ENCODE measurements at regions of chr6 and their contacts with region 1.

Region 1: GRCh38 chr6:44655412-44656342 is 268.2 kb downstream of the CDC5L start:
- DNase-seq: peak; percentile 90
- H3K4me3 Mint-ChIP-seq: peak overlapping the region; percentile 2
- H3K27ac Mint-ChIP-seq: peak overlapping the region; percentile 20
- H3K4me1 Mint-ChIP-seq: peaks cover 21% of the 10 kb centered on the region
- H3K27me3 Mint-ChIP-seq: peaks cover 83% of the 10 kb centered on the region
- CTCF ChIP-seq: peak; percentile 98

Region 2: DNA sequence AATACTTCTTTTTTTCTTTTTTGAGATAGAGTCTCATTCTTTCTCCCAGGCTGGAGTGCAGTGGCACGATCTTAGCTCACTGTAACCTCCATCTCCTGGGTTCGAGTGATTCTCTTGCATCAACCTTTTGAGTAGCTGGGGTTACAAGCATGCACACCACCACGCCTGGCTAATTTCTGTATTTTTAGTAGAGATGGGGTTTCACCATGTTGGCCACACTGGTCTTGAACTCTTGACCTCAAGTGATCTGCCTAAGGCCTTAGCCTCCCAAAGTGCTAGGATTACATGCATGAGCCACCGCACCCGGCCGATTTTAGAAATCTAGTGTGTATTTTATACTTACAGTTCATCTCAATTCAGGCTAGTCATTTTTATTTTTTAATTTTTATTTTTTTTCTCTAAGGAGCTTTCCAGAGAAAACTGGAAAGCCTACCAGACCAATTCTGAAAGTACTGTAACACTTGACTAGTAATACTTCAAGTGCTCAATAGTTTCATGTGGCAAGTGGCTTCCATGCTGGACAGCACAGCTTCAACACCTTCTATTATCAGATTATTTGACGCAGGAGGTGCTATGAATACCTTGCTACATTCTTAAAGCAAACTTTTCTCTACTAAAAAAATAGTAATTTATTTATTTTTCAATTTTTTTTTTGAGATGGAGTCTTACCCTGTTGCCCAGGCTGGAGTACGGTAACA is 1113.8 kb before region 1 on chr6:
- CTCF ChIA-PET with region 1: no interaction called
- intact Hi-C with region 1: no loop called
- DNase-seq: no peak
- H3K4me3 Mint-ChIP-seq: no peak overlapping the region
- H3K27ac Mint-ChIP-seq: no peak overlapping the region
- H3K4me1 Mint-ChIP-seq: no peaks in the 10 kb centered on the region
- H3K27me3 Mint-ChIP-seq: no peaks in the 10 kb centered on the region
- CTCF ChIP-seq: no peak

Region 3: DNA sequence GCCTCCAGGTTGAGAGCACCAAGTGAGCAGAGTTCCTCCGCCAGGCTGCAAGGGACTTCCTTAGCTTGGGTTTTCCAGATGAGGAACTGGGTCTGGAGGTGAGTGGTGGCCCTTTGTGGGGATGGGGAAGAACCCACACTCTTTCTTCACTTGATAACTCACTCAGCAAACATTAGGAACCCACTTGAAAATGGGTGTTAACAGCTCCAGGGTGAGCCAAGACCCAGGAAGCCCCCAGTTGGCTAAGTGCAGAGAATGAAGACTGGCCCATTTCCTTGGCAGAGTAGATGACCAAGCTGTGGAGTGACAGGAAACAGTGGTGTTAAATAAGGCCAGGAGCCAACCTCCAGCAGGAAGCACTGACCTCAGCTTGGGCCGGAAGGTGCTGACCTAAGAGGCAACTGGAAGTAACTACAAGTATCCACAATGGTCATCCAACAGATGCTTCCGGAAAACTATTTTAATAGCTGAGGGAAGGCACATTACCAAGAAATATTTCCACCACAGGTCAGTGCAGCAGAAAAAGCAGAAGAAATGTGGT is 551.1 kb before region 1 on chr6:
- CTCF ChIA-PET with region 1: no interaction called
- intact Hi-C with region 1: no loop called
- DNase-seq: no peak
- H3K4me3 Mint-ChIP-seq: no peak overlapping the region
- H3K27ac Mint-ChIP-seq: peak overlapping the region; percentile 11
- H3K4me1 Mint-ChIP-seq: peaks cover 34% of the 10 kb centered on the region
- H3K27me3 Mint-ChIP-seq: no peaks in the 10 kb centered on the region
- CTCF ChIP-seq: no peak

Region 4: GRCh38 chr6:44681761-44682160 is 26.1 kb after region 1 on chr6:
- CTCF ChIA-PET with region 1: no interaction called
- intact Hi-C with region 1: no loop called
- DNase-seq: peak; percentile 31
- H3K4me3 Mint-ChIP-seq: no peak overlapping the region
- H3K27ac Mint-ChIP-seq: no peak overlapping the region
- H3K4me1 Mint-ChIP-seq: peaks cover 7% of the 10 kb centered on the region
- H3K27me3 Mint-ChIP-seq: peaks cover 87% of the 10 kb centered on the region
- CTCF ChIP-seq: no peak

Region 5: DNA sequence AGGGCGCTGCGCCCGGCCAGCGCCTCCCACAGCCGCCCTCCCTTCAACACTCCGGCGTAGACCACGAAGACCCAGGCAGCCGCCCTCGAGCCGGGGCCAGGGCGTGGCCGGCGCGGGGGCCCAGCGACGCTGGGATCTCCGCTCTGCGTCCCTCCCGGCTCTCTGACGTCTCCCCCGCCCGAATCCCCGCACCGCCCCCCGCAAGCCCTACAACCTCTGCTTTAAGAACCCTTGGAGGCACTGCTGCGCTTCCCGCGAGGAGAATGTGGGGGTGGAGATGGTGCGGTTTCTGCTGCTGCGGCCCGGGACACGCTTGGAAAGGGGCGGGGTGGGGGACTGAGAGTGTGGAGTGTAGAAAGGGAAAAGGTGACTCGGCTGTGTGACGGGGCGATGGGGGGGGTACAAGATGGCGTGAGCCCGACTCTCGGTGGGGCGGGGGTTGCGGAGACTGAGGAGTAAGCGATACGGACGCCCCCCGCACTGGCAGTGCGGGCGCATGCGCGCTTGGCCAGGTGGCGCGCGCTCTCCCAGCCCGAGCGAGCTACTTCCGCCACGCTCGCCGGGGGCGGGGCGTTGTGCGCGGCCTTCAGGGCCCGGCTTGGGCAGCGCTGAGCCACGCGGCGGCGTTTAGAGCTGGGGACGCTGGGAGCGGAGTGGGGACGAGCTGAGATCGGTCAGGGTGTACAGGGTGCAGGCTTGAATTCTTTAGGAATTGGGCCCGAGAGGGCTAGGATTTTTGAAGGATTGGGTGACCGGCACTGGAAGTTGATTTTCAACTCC is 722.1 kb after region 1 on chr6 and contains the start of gene SUPT3H:
- CTCF ChIA-PET with region 1: no interaction called
- intact Hi-C with region 1: loop called (anchors 5 kb)
- DNase-seq: peak; percentile 93
- H3K4me3 Mint-ChIP-seq: peak within 1 kb of the TSS; percentile 96
- H3K27ac Mint-ChIP-seq: peak within 1 kb of the TSS; percentile 97
- H3K4me1 Mint-ChIP-seq: no peaks in the 10 kb centered on the region
- H3K27me3 Mint-ChIP-seq: no peaks in the 10 kb centered on the region
- CTCF ChIP-seq: no peak
- total RNA-seq, gene SUPT3H: 7.0 and 10.3 TPM in 2 replicates

Region 6: DNA sequence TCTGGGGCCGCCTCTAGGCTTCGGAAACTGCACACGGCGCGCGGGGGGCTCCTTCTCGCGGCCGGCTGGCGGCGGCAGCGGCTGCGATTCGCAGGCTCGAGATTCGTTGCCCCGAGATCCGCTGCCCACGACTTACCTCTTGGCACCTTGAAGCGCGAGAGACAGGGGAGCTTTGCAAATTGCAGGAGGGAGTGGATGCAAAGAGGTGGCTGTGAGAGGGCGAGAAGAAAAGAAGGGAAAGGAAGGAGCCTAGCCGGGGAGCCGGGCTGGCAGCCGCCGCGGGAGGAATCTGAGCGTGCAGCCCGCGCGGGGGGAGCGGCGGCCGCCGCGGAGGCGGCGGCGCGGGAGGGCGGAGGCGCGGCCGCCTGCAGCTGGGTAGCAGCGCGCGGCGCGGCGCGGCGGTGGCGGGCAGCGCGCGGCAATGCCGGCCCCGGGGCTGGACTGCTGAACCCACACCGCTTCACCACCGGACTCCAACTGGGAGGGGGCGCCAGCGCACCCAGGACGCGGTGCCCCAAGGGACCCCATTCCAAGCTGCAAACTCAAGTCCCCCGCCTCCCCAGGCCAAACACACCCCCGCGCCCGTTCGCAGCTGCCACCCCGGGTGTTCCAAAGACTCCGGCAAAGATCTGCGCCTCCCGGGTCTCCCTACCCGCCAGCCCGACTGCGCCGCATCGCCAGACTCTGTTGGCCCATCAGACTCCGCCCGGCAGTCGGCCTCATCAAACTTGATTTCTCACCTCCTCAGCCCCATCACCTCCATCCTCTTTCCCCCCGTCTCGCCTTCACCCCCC is 766.2 kb after region 1 on chr6:
- CTCF ChIA-PET with region 1: interaction called, 6 read pairs
- intact Hi-C with region 1: loop called (anchors 2 kb)
- DNase-seq: peak; percentile 61
- H3K4me3 Mint-ChIP-seq: peak overlapping the region; percentile 82
- H3K27ac Mint-ChIP-seq: peak overlapping the region; percentile 35
- H3K4me1 Mint-ChIP-seq: no peaks in the 10 kb centered on the region
- H3K27me3 Mint-ChIP-seq: peaks cover 50% of the 10 kb centered on the region
- CTCF ChIP-seq: no peak

Region 7: GRCh38 chr6:45922728-45923351 is 1267.2 kb after region 1 on chr6:
- CTCF ChIA-PET with region 1: interaction called, 16 read pairs
- intact Hi-C with region 1: loop called (anchors 2 kb)
- DNase-seq: peak; percentile 52
- H3K4me3 Mint-ChIP-seq: no peak overlapping the region
- H3K27ac Mint-ChIP-seq: no peak overlapping the region
- H3K4me1 Mint-ChIP-seq: peaks cover 8% of the 10 kb centered on the region
- H3K27me3 Mint-ChIP-seq: no peaks in the 10 kb centered on the region
- CTCF ChIP-seq: peak; percentile 63

Measured in Calu3 (cell line).